ENCODE measurements at regions of chr6 and their contacts with region 1.

Region 1: GRCh38 chr6:14476793-14477531 is 359.4 kb downstream of the CD83 start:
- DNase-seq: peak; percentile 96
- H3K4me3 ChIP-seq: peak overlapping the region in 3 of 4 donors; percentile 14 to 23 (median 18)
- H3K27ac ChIP-seq: peak overlapping the region; percentile 78 to 87 (median 84)
- H3K4me1 ChIP-seq: peaks cover 3 to 34% (median 28%) of the 10 kb centered on the region in 4 donors
- H3K27me3 ChIP-seq: no peaks in the 10 kb centered on the region
- CTCF ChIP-seq: no peak
- EP300 ChIP-seq: peak; percentile 94 to 99 (median 98)
- POLR2A ChIP-seq: no peak

Region 2: DNA sequence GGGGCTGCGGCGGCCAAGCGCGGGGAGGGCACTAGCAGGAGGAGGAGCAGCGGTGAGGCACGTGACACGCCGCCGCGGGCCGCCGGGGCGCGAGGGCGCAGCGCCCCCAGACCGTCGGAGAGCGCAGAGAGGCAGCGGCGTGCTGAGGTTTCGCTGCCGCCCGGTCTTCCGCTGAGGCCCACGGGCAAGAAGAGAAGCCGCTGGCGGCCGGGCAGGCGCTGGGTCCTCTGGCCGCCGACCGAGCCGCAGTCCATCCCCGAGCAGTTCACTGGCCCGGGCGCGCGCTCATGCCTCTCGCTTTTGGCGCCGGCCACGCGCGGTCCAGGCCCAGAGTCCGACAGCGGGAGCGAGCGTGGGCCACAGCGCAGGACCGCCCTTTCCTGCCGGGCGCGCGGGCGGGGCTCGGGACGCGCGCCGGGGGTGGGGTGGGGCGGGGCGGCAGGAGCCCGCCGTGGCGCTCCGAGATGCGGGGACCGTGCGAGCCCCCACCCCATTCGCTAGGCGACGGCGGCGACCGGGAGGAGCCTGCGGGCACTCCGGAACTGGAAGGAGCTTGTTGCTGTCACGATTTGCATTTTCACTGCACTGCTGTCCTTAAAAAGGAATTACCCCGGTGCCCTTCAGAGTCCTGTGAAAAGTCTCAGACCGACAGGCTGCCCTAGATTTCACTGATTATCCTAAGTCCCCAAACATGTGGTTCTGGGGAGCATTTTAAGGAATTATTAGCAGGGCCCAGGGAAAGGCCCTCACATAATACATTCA is 662.6 kb before region 1 on chr6 and contains the start of gene MCUR1:
- intact Hi-C with region 1: no loop called
- DNase-seq: peak; percentile 93
- H3K4me3 ChIP-seq: peak within 1 kb of the TSS; percentile 79 to 86 (median 82)
- H3K27ac ChIP-seq: peak within 1 kb of the TSS; percentile 92 to 99 (median 98)
- H3K4me1 ChIP-seq: peaks cover 0 to 39% (median 36%) of the 10 kb centered on the region in 4 donors
- H3K27me3 ChIP-seq: no peaks in the 10 kb centered on the region
- CTCF ChIP-seq: no peak
- EP300 ChIP-seq: no peak
- POLR2A ChIP-seq: no peak
- total RNA-seq, gene MCUR1: 7.2 to 13.2 (median 9.0) TPM

Region 3: DNA sequence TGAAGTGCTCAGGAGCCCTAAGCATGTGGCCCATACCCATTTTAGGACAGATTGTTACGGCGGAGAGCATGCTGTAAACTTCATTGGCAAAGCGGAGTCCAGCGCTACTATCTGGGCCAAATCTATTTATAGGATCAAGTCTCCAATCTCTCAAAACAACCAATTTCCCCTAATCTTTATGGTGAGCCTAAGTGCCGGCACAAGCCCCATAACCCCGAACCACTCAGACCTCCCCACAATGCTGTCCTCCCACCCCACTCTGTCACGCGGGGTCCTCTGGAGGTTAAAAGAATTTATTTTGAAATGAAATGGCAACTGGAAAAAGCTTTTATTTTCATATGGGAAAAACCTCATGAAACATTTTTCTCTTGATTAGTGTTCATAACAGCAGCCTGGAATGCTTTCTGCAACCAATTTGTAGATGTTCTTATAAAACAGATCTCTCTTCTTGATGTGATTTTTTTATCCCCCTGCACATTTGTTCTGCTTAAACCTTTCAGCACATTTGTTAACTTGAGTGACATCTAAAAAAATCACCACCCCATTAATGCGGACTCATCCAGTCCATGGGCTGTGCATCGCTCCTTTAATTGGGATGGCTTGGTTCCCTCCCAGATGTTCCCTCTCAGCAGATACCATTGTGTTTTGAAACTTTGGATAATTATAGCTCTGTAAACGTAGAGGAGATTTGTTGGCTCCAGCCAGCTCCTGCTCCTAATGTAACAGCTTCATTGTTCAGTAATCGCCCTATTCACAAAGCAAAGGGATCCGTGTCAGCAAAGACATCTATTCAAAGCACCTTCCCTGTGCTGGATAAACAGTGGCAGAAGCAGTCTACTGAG is 35.8 kb before region 1 on chr6:
- intact Hi-C with region 1: loop called (anchors 5 kb)
- DNase-seq: peak; percentile 85
- H3K4me3 ChIP-seq: peak overlapping the region in 1 of 4 donors; percentile 2
- H3K27ac ChIP-seq: peak overlapping the region; percentile 69 to 87 (median 78)
- H3K4me1 ChIP-seq: peaks cover 0 to 28% (median 25%) of the 10 kb centered on the region in 4 donors
- H3K27me3 ChIP-seq: no peaks in the 10 kb centered on the region
- CTCF ChIP-seq: no peak
- EP300 ChIP-seq: peak in 2 of 4 donors; percentile 34 to 50
- POLR2A ChIP-seq: no peak

Region 4: DNA sequence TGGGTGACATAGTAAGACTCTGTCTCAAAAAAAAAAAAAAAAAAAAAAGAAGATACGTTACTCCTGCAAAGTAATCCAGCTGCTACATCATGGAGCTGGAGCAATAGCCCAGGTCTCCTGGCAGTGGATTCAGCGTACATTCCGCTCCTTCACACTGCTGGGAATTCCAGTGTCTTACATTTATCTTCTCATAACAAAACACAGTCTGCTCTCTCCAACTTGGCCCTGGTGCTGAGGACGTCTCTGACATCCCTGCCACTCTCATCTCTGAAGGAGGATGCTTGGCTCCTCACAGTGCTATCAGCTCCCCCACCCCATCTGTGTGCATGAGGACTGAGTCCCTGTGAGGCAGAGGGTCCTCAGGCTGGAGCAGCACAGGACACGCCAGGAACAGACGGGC is 170.4 kb after region 1 on chr6:
- intact Hi-C with region 1: loop called (anchors 5 kb)
- DNase-seq: peak; percentile 87
- H3K4me3 ChIP-seq: no peak overlapping the region
- H3K27ac ChIP-seq: peak overlapping the region in 2 of 4 donors; percentile 54 to 73
- H3K4me1 ChIP-seq: peaks cover 0 to 6% (median 0%) of the 10 kb centered on the region in 4 donors
- H3K27me3 ChIP-seq: no peaks in the 10 kb centered on the region
- CTCF ChIP-seq: no peak
- EP300 ChIP-seq: peak in 1 of 4 donors; percentile 75
- POLR2A ChIP-seq: no peak

Measured in sigmoid colon (tissue), 7 donors.